ENCODE measurements at regions of chr12 and their contacts with region 1.

Region 1: GRCh38 chr12:6470375-6471163 is at the start of gene VAMP1:
- DNase-seq: peak; percentile 97
- ATAC-seq: peak; percentile 92
- H3K4me3 ChIP-seq: peak within 1 kb of the TSS; percentile 54 to 82 (median 75)
- H3K4me3 Mint-ChIP-seq: peak within 1 kb of the TSS; percentile 90
- H3K27ac ChIP-seq: peak within 1 kb of the TSS; percentile 75 to 82
- H3K27ac Mint-ChIP-seq: peak within 1 kb of the TSS; percentile 97
- H3K4me1 ChIP-seq: peaks cover 28 to 45% of the 10 kb centered on the region in 2 donors
- H3K4me1 Mint-ChIP-seq: peaks cover 49% of the 10 kb centered on the region
- H3K27me3 ChIP-seq: no peaks in the 10 kb centered on the region
- H3K27me3 Mint-ChIP-seq: no peaks in the 10 kb centered on the region
- CTCF ChIP-seq: no peak
- total RNA-seq, gene VAMP1: 98.9 and 108 TPM in 2 replicates

Region 2: DNA sequence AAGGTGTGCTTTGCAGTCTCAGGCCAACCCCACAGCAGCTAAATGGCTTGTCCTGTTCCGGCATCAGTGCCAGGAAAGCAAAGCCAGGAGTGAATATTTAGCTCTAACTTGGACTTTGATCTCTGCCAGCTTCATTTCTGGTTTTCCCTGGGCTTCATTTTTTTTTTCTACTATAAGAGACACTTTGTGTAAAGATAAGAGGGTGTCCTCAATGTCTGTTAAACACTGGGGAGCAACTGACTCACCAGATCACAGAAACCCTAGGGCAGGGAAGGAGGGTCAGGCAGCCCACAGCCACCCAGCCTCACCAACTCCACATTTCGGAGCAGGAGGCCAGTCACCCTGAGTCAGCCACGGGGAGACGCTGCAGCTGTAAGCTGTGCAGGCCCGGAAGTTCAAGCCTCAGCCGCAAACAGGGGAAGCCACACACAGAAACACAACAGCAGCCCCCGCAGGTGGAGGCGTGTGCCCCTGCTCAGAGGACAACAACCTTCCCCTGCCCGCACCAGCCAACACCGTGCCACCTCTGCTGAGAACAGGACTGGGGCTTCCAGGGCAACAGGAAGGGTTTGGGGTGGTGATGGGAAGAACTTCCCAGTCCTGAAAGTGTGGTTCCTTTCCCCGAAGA is 135.0 kb before region 1 on chr12:
- CTCF ChIA-PET with region 1: interaction called, 3 read pairs
- POLR2A ChIA-PET with region 1: no interaction called
- intact Hi-C with region 1: loop called (anchors 10 kb)
- DNase-seq: peak; percentile 75
- ATAC-seq: peak; percentile 79
- H3K4me3 ChIP-seq: peak overlapping the region in 2 of 5 experiments; percentile 34 to 40
- H3K4me3 Mint-ChIP-seq: peak overlapping the region; percentile 66
- H3K27ac ChIP-seq: no peak overlapping the region
- H3K27ac Mint-ChIP-seq: no peak overlapping the region
- H3K4me1 ChIP-seq: peaks cover 53 to 54% of the 10 kb centered on the region in 2 donors
- H3K4me1 Mint-ChIP-seq: peaks cover 13% of the 10 kb centered on the region
- H3K27me3 ChIP-seq: peaks cover 0 to 96% (median 60%) of the 10 kb centered on the region in 4 experiments
- H3K27me3 Mint-ChIP-seq: peaks cover 55% of the 10 kb centered on the region
- CTCF ChIP-seq: peak; percentile 57

Region 3: DNA sequence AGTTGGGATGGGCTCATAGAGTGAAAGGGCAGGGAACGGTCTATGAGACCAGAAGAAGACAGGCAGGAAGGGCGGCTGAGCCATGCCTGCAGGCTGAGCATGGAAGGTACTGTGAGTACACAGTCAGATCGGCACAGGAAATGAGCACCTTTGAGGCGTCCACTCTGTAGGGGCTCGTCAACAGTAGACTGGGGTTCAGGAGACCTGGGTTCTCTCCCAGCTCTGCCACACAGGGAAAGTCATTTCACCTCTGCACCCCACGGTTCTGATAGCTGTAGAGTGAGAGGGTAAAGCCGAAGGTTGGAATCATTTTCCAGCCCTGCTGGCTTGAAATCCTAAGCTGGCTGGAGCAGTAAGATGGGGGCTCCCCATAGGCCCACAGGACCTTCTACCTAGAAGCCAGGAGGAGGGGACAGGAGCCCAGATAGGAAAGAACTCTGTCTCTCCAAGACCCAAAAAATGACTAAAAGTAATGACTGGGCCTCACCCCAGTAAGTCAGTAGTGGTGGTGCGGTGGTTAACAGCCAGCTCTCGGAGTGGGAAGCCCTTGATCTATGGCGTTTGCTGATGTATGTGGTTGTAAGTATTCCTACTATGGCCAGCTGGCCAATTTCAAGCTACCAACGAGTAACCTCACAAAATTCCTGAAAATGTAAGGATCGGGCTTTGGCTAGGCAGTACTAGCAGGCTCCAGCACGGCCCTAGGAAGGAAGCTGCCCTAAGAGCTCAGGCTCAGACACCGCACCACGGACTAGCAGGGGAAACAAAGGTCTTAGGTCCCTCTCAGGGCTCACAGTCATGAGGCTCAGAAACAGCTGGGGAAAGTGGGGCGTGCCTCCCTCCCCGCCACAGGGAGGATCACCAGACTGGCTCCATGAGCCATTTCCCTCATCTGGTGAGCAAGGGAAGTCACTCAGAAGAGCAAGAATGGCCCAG is 36.1 kb before region 1 on chr12:
- CTCF ChIA-PET with region 1: interaction called, 17 read pairs
- POLR2A ChIA-PET with region 1: interaction called, 6 read pairs
- intact Hi-C with region 1: no loop called
- DNase-seq: no peak
- ATAC-seq: peak; percentile 19
- H3K4me3 ChIP-seq: peak overlapping the region in 1 of 5 experiments; percentile 25
- H3K4me3 Mint-ChIP-seq: no peak overlapping the region
- H3K27ac ChIP-seq: no peak overlapping the region
- H3K27ac Mint-ChIP-seq: peak overlapping the region; percentile 65
- H3K4me1 ChIP-seq: peaks cover 25 to 42% of the 10 kb centered on the region in 2 donors
- H3K4me1 Mint-ChIP-seq: peaks cover 37% of the 10 kb centered on the region
- H3K27me3 ChIP-seq: no peaks in the 10 kb centered on the region
- H3K27me3 Mint-ChIP-seq: no peaks in the 10 kb centered on the region
- CTCF ChIP-seq: no peak

Region 4: DNA sequence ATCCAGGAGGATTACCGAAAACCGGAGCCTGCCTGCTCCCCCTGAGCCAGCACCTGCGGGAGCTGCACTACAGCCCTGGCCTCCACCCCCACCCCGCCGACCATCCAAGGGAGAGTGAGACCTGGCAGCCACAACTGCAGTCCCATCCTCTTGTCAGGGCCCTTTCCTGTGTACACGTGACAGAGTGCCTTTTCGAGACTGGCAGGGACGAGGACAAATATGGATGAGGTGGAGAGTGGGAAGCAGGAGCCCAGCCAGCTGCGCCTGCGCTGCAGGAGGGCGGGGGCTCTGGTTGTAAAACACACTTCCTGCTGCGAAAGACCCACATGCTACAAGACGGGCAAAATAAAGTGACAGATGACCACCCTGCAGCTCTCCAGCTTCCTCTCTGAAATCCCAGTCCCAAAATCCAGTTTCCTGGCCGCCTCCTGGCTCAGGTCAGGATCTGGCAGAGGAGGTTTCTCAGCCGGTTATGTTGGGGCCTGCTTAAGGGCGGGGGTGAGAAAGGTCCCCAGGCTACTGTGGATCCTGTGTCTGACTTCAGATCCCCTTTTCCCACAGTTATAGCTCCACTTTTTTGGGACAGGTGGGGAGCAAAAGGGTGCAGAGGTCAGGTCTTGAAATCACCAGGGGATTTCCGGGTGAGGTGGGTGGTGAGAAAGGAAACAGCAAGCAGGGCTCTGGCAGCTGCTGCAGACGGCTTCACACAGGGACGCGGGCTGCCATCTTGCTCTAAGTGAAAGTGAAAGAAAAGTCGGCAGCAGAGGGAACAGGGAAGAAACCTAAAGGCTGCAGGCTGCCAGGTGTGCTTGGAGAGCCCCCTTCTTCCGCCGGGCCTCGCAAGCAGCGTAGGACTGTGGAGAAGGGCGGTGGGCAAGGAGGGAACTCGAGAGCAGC is 19.0 kb before region 1 on chr12 and contains the start of gene TAPBPL:
- CTCF ChIA-PET with region 1: interaction called, 115 read pairs
- POLR2A ChIA-PET with region 1: interaction called, 25 read pairs
- intact Hi-C with region 1: no loop called
- DNase-seq: peak; percentile 91
- ATAC-seq: peak; percentile 81
- H3K4me3 ChIP-seq: peak within 1 kb of the TSS; percentile 86 to 97 (median 94)
- H3K4me3 Mint-ChIP-seq: peak within 1 kb of the TSS; percentile 97
- H3K27ac ChIP-seq: peak within 1 kb of the TSS; percentile 96 to 98
- H3K27ac Mint-ChIP-seq: peak within 1 kb of the TSS; percentile 99
- H3K4me1 ChIP-seq: peaks cover 33 to 55% of the 10 kb centered on the region in 2 donors
- H3K4me1 Mint-ChIP-seq: peaks cover 64% of the 10 kb centered on the region
- H3K27me3 ChIP-seq: no peaks in the 10 kb centered on the region
- H3K27me3 Mint-ChIP-seq: no peaks in the 10 kb centered on the region
- CTCF ChIP-seq: no peak
- total RNA-seq, gene TAPBPL: 71.2 and 80.5 TPM in 2 replicates

Region 5: GRCh38 chr12:6533923-6534694 is 63.5 kb after region 1 on chr12 and contains the start of gene GAPDH:
- CTCF ChIA-PET with region 1: interaction called, 48 read pairs
- POLR2A ChIA-PET with region 1: interaction called, 32 read pairs
- intact Hi-C with region 1: loop called (anchors 1 kb)
- DNase-seq: peak; percentile 91
- ATAC-seq: peak; percentile 71
- H3K4me3 ChIP-seq: peak within 1 kb of the TSS; percentile 71 to 97 (median 92)
- H3K4me3 Mint-ChIP-seq: peak within 1 kb of the TSS; percentile 99
- H3K27ac ChIP-seq: peak within 1 kb of the TSS; percentile 74 to 80
- H3K27ac Mint-ChIP-seq: peak within 1 kb of the TSS; percentile 98
- H3K4me1 ChIP-seq: peaks cover 27 to 37% of the 10 kb centered on the region in 2 donors
- H3K4me1 Mint-ChIP-seq: peaks cover 48% of the 10 kb centered on the region
- H3K27me3 ChIP-seq: no peaks in the 10 kb centered on the region
- H3K27me3 Mint-ChIP-seq: no peaks in the 10 kb centered on the region
- CTCF ChIP-seq: no peak
- total RNA-seq, gene GAPDH: 499 and 507 TPM in 2 replicates

Region 6: DNA sequence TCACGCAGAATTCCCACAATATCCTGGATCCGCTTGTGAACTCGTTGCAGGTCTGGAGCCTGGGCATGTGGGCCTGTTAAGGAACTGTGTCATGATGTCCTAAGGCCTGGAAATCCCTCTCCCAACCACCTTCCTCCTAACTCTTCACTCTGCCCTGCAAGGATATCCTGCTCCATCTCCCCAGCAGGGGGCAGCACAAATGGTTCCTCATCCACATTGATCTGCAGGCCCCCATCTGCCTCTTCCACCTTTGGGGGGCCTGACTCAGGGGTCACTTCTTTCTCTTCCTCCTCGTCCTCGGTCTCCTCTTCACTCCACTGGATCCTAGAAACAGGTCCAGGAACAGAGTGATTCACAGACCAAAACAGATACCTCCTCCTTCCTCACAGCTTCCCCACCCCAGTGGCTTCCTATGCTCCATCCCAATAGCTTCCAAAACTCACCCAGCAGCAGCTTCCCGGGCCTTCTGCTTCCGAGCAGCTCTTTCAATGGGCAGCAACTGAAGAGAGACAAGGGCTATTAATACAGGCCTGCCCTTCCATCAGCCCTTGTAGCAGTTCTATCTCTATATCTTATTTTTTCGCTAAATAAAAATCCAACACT is 93.0 kb after region 1 on chr12:
- CTCF ChIA-PET with region 1: no interaction called
- POLR2A ChIA-PET with region 1: no interaction called
- intact Hi-C with region 1: loop called (anchors 1 kb)
- DNase-seq: peak; percentile 76
- ATAC-seq: peak; percentile 28
- H3K4me3 ChIP-seq: no peak overlapping the region
- H3K4me3 Mint-ChIP-seq: no peak overlapping the region
- H3K27ac ChIP-seq: no peak overlapping the region
- H3K27ac Mint-ChIP-seq: peak overlapping the region; percentile 10
- H3K4me1 ChIP-seq: peaks cover 7 to 13% of the 10 kb centered on the region in 2 donors
- H3K4me1 Mint-ChIP-seq: peaks cover 28% of the 10 kb centered on the region
- H3K27me3 ChIP-seq: no peaks in the 10 kb centered on the region
- H3K27me3 Mint-ChIP-seq: no peaks in the 10 kb centered on the region
- CTCF ChIP-seq: peak; percentile 95

Region 7: DNA sequence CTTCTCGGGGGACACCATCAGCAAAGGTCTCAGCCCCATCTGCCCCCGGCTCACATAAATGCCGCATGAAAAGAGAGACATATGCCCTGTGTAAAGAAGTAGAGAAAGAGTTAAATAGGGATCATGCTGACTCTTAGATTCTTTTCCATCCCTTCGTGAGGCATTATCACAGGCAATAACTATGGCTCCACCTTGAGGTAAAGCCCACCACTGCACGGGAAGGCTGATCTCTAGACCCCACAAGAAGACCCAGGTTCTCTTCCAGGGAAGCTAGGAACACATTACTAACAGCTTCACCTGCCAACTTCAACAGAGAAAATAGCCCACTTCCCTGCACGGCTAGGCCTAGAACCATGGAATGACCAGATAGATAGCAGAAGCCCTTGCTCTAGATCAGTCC is 111.6 kb after region 1 on chr12:
- CTCF ChIA-PET with region 1: no interaction called
- POLR2A ChIA-PET with region 1: no interaction called
- intact Hi-C with region 1: no loop called
- DNase-seq: no peak
- ATAC-seq: no peak
- H3K4me3 ChIP-seq: no peak overlapping the region
- H3K4me3 Mint-ChIP-seq: no peak overlapping the region
- H3K27ac ChIP-seq: no peak overlapping the region
- H3K27ac Mint-ChIP-seq: no peak overlapping the region
- H3K4me1 ChIP-seq: no peaks in the 10 kb centered on the region
- H3K4me1 Mint-ChIP-seq: no peaks in the 10 kb centered on the region
- H3K27me3 ChIP-seq: no peaks in the 10 kb centered on the region
- H3K27me3 Mint-ChIP-seq: no peaks in the 10 kb centered on the region
- CTCF ChIP-seq: peak; percentile 17

Measured in B cell (primary cell).